Activated T-helper 1 cell treated with anti-CD3 and anti-CD28 coated beads, Interleukin-12 subunit alpha, Interleukin-12 subunit beta, Interleukin-2, Interleukin-4 antibody, amounts not matched to agents 30 ng/mL and 10 ng/mL and 1 ng/mL, durations not matched to agents 14 hours and 24 hours and 36 hours (primary cell): ENCODE measurements at regions of chr16 and their contacts with region 1.

Region 1: DNA sequence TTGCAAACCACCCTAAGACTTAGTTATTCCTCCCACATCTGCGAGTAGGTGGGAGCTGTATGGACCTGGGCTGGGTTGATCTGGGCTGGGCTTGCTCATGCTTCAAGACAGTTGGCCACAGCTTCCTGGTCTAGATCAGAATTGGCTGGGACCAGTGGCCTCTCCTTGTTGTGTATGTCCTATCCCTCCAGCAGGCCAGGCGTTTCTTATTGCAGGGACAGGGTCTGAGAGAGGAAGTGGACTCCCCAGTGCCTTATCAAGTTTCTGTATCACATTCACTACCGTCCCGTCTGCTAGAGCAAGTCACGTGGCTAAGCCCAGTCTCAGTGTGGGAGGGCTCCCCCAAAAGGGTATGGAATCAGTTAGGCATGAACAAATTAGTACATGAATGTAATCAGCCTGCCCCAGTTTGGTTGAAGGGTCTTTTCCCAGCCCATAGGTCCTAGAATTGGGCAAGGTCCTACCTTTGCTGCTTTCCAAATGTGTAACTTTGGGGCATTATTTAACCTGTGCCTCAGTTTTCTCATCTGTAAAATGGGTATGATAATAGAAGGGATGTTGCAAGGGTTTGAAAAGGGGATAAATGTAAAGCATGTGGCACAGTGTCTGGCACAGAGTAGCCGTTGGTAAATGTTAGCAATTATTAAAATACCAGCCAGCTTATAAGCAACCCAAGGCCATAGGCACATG is 36.0 kb downstream of the NKD1 start:
- DNase-seq: no peak
- H3K4me3 Mint-ChIP-seq: no peak overlapping the region
- H3K27ac Mint-ChIP-seq: no peak overlapping the region
- H3K4me1 Mint-ChIP-seq: peaks cover 12% of the 10 kb centered on the region
- H3K27me3 Mint-ChIP-seq: peaks cover 2% of the 10 kb centered on the region

Region 2: DNA sequence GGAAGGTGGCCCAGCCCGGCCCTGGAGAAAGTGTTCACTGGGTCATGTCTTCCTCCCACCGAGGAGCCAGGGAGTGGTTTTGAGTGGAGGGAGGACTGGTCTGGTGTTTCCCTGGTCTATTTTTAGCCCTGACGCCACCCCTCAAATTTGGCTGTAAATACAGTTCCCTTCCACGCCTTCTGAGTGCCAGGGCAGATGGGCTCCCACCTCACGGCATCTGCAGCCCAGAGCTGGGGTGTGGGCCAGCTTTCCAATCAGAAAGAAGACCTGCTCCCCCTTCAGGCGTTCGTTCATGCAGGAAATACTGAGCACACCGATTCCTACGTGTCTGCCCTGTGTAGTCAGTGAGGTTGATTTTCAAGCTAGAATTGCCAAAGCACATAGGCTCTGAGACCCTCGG is 43.2 kb after region 1 on chr16:
- intact Hi-C with region 1: loop called (anchors 5 kb)
- DNase-seq: peak; percentile 5
- H3K4me3 Mint-ChIP-seq: no peak overlapping the region
- H3K27ac Mint-ChIP-seq: no peak overlapping the region
- H3K4me1 Mint-ChIP-seq: peaks cover 14% of the 10 kb centered on the region
- H3K27me3 Mint-ChIP-seq: no peaks in the 10 kb centered on the region

Region 3: GRCh38 chr16:51035110-51035498 is 450.9 kb after region 1 on chr16:
- intact Hi-C with region 1: no loop called
- DNase-seq: no peak
- H3K4me3 Mint-ChIP-seq: no peak overlapping the region
- H3K27ac Mint-ChIP-seq: no peak overlapping the region
- H3K4me1 Mint-ChIP-seq: no peaks in the 10 kb centered on the region
- H3K27me3 Mint-ChIP-seq: peaks cover 10% of the 10 kb centered on the region